MCF 10A (cell line): ENCODE measurements at regions of chr7 and their contacts with region 1.

Region 1: DNA sequence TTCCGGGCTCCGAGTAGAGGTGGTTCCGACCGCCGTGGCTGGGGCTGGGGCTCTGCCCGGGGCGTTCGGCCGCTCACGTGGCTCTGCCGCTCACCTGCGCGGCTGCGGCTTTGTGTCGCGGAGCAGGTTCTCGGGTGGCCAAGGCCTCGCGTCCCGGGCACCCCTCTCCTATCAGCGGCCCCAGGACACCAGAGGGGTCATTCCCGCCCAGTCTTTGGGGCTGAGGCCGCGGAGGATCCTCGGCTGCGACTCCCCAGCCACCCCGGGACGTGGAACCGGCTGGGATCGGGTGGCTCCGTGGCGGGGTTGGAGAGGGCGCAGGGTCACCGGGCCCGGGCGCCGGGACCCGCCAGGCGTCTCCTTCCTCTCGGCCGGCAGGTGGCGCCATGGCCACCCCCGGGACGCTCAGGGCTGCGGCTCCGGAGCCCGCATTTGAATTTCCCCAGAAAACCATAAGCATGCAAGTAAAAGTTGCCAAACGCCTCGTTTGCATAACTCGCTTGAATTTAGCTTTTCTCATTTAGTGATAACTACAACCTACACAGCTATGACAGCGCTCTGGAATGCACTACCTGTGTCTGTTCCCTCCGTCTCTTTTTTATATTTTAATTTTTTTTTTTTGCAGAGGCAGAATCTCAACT is 1.2 kb downstream of the COL26A1 start:
- DNase-seq: peak; percentile 63
- H3K4me3 Mint-ChIP-seq: peak overlapping the region; percentile 33
- H3K27ac Mint-ChIP-seq: no peak overlapping the region
- H3K4me1 Mint-ChIP-seq: no peaks in the 10 kb centered on the region
- H3K27me3 Mint-ChIP-seq: no peaks in the 10 kb centered on the region
- CTCF ChIP-seq: peak; percentile 78

Region 2: DNA sequence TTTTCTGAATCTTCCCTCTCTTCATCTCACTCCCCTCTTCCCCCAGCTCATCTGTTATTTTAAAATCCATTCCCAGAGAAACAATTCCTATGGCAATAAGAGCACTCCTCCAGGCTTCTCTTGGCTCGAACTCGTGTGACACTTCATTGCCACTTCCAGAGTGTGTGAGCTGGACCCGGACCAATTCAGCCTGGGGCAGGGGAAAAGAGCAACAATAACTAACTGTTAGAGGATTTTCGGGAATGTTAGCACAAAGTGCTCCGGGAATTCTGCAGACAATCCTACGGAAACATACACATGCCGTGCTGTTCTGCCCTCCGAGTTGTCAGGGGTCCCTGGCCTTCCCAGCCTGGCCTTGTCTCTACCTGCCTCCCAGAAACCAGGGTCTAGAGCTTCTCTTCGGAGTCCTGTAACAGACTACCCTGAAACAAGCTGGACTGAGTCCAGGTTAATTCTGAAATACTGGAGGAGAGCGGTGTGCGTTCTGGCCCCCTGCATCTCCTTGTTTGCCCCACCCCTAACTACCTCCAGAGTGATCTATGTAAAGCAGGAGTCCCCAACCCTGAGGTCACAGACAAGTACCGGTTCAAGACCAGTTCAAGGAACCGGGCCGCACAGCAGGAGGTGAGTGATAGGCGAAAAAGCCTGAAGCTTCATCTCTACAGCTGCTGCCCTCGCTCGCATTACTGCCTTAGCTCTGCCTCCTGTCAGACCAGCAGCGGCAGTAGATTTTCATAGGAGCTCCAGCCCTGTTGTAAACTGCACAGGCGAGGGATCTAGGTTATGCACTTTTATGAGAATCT is 10.2 kb after region 1 on chr7:
- CTCF ChIA-PET with region 1: interaction called, 24 read pairs
- POLR2A ChIA-PET with region 1: no interaction called
- intact Hi-C with region 1: no loop called
- DNase-seq: peak; percentile 57
- H3K4me3 Mint-ChIP-seq: no peak overlapping the region
- H3K27ac Mint-ChIP-seq: no peak overlapping the region
- H3K4me1 Mint-ChIP-seq: peaks cover 9% of the 10 kb centered on the region
- H3K27me3 Mint-ChIP-seq: peaks cover 43% of the 10 kb centered on the region
- CTCF ChIP-seq: no peak

Region 3: GRCh38 chr7:101410743-101411507 is 47.1 kb after region 1 on chr7:
- CTCF ChIA-PET with region 1: interaction called, 10 read pairs
- POLR2A ChIA-PET with region 1: no interaction called
- intact Hi-C with region 1: no loop called
- DNase-seq: no peak
- H3K4me3 Mint-ChIP-seq: no peak overlapping the region
- H3K27ac Mint-ChIP-seq: no peak overlapping the region
- H3K4me1 Mint-ChIP-seq: no peaks in the 10 kb centered on the region
- H3K27me3 Mint-ChIP-seq: peaks cover 70% of the 10 kb centered on the region
- CTCF ChIP-seq: peak; percentile 76

Region 4: GRCh38 chr7:101442521-101442981 is 78.7 kb after region 1 on chr7:
- CTCF ChIA-PET with region 1: interaction called, 5 read pairs
- POLR2A ChIA-PET with region 1: no interaction called
- intact Hi-C with region 1: loop called (anchors 5 kb)
- DNase-seq: no peak
- H3K4me3 Mint-ChIP-seq: no peak overlapping the region
- H3K27ac Mint-ChIP-seq: no peak overlapping the region
- H3K4me1 Mint-ChIP-seq: peaks cover 6% of the 10 kb centered on the region
- H3K27me3 Mint-ChIP-seq: peaks cover 29% of the 10 kb centered on the region
- CTCF ChIP-seq: no peak

Region 5: GRCh38 chr7:101507791-101508252 is 144.0 kb after region 1 on chr7:
- CTCF ChIA-PET with region 1: interaction called, 7 read pairs
- POLR2A ChIA-PET with region 1: no interaction called
- intact Hi-C with region 1: loop called (anchors 5 kb)
- DNase-seq: peak; percentile 70
- H3K4me3 Mint-ChIP-seq: no peak overlapping the region
- H3K27ac Mint-ChIP-seq: no peak overlapping the region
- H3K4me1 Mint-ChIP-seq: no peaks in the 10 kb centered on the region
- H3K27me3 Mint-ChIP-seq: peaks cover 55% of the 10 kb centered on the region
- CTCF ChIP-seq: peak; percentile 85

Region 6: GRCh38 chr7:101542527-101543241 is 178.8 kb after region 1 on chr7:
- CTCF ChIA-PET with region 1: interaction called, 5 read pairs
- POLR2A ChIA-PET with region 1: no interaction called
- intact Hi-C with region 1: loop called (anchors 5 kb)
- DNase-seq: peak; percentile 73
- H3K4me3 Mint-ChIP-seq: no peak overlapping the region
- H3K27ac Mint-ChIP-seq: no peak overlapping the region
- H3K4me1 Mint-ChIP-seq: peaks cover 1% of the 10 kb centered on the region
- H3K27me3 Mint-ChIP-seq: no peaks in the 10 kb centered on the region
- CTCF ChIP-seq: peak; percentile 92

Region 7: DNA sequence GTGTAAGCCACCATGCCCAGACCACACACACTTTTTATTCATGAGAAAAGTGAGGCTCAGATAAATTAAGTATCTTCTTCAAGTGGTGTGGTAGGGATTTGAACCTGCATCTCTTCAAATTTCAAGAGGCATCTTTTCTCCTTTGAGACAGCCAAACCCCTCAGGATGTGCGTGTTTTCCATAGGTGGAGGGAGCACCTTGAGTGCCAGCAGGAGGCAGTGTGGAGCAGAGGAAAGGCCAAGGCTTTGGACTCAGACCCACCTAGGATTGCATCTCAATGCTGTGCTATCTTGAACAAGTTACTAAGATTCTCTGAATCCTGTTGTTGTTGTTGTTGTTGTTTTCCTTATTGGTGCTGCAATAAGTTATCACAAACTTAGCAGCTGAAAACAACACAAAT is 305.5 kb after region 1 on chr7:
- CTCF ChIA-PET with region 1: no interaction called
- POLR2A ChIA-PET with region 1: no interaction called
- intact Hi-C with region 1: no loop called
- DNase-seq: no peak
- H3K4me3 Mint-ChIP-seq: no peak overlapping the region
- H3K27ac Mint-ChIP-seq: no peak overlapping the region
- H3K4me1 Mint-ChIP-seq: no peaks in the 10 kb centered on the region
- H3K27me3 Mint-ChIP-seq: no peaks in the 10 kb centered on the region
- CTCF ChIP-seq: peak; percentile 13

Region 8: DNA sequence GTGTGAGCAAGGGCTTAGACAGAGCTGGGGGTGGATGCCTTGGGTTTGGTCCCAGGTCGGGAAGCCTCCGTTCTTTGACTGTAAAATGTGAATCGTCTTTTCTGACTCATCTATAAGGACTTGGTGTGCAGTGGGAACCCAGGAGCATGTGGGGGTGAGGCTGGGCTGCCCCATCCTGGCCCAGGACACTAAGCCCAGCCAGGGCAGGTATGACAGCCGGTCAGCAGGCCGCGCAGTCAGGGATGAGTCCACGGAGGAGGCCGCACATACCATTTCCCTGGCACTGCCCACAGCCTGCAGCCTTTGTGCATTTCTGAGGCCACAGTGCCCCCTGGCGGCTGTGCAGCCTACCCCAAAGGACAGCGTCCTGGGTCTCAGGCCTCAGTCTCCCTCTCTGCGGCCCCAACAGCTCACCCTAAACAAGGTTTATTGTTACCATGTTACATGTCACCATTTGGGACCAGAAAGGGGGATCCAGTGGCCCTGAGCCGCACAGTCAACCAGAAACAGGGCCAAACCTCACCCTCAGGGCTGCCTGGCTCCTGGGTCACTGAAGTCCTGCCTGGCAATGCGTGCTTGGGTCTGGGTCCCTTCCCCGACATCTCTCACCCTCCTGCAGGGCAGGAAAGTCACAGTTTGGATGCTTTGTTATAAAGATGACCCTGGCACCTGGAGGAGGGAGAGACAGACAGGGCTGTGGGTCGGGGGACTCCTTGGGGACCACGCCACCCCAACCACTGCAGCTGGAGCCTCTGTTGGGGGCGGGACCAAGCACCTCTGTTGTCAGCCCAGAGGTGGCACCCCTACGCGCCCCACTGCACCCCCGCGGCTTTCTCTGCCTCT is 908.4 kb after region 1 on chr7:
- CTCF ChIA-PET with region 1: no interaction called
- POLR2A ChIA-PET with region 1: no interaction called
- intact Hi-C with region 1: loop called (anchors 5 kb)
- DNase-seq: peak; percentile 84
- H3K4me3 Mint-ChIP-seq: no peak overlapping the region
- H3K27ac Mint-ChIP-seq: no peak overlapping the region
- H3K4me1 Mint-ChIP-seq: peaks cover 13% of the 10 kb centered on the region
- H3K27me3 Mint-ChIP-seq: peaks cover 14% of the 10 kb centered on the region
- CTCF ChIP-seq: peak; percentile 94